Right ventricle myocardium inferior (tissue), 1 donor: ENCODE measurements at regions of chr10 and their contacts with region 1.

Region 1: DNA sequence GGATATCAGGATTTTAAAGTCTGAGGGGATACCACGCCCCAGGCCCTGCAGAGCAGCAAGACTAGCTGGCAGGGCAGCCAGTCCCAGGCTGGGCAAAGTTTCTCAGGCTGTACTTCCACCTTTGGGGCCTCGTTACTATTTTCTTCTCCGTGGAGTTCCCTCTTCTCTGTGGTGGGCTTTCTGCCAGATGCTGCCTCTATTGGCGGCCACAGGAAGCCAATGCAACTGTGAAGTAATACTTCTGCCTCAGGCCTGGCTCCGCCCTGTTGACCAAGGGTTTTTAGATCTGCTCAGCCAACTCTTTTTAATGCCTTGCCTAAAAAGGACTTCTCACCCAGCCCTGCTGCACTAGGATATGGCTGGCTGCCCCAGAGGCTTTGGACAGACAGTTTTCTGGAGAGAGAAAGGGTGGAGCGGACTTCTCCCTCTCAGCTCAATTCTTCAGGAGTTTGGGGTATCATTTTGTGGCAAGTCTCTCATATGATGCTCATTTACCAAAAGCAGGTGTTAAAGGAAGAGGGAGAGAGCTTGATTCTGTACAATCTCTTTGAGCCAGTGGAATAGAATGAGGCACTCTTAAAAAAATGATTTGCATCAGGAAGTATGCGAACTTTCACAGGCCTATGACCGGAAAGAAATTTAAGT is 67.4 kb downstream of the HHEX start:
- DNase-seq: peak; percentile 92
- ATAC-seq: peak; percentile 95

Region 2: GRCh38 chr10:92592761-92593618 is 164.2 kb before region 1 on chr10 and contains the start of gene KIF11:
- intact Hi-C with region 1: loop called (anchors 5 kb)
- DNase-seq: peak; percentile 100
- ATAC-seq: peak; percentile 97
- total RNA-seq, gene KIF11: 1.1 TPM

Region 3: GRCh38 chr10:92689663-92690210 is 67.5 kb before region 1 on chr10 and contains the start of gene HHEX:
- intact Hi-C with region 1: loop called (anchors 1 kb)
- DNase-seq: peak; percentile 91
- ATAC-seq: peak; percentile 76
- total RNA-seq, gene HHEX: 2.6 TPM

Region 4: GRCh38 chr10:92695679-92696605 is 61.2 kb before region 1 on chr10:
- intact Hi-C with region 1: loop called (anchors 1 kb)
- DNase-seq: no peak
- ATAC-seq: no peak

Region 5: DNA sequence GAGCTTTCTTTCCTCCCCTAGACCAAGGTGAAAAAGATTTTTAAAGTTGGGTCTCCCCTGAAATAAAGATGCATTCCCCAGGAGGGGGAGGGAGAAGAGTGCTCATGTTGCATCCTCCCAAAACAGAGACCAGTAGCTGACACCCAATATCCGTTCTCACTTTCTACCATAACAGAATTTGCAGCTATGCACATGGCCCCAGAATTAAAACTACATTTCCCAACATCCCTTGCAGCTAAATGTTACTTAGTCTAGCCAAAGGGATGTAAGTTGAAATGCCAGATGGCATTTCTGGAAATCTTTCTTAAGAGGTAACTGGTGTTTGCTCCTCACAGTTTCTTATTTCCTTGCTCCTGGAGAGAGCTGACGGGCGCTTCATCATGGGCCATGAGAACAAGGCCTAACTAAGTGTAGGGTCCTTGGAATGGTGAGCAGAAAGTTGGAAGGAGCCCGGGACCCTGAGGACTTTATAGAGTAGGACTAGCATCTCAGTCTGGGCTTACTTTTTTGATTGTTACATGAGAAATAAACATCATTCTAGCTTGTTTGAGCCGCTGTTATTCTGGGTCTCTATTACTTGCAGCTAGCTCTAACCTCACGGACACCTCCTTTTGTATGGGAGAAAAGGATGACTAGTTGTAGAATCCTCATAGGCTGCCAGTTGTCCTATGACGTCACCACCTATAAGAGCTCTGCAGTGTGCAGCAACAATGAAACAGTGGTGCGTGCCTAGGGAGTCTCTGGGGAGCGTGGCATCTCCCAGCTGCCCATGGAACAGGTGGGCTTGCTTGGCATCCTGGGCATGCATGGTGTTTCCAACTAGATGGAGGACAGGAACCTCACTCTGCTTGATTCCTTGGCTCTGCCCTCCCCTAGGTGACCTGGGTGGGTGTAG is 45.0 kb after region 1 on chr10:
- intact Hi-C with region 1: no loop called
- DNase-seq: no peak
- ATAC-seq: no peak

Region 6: DNA sequence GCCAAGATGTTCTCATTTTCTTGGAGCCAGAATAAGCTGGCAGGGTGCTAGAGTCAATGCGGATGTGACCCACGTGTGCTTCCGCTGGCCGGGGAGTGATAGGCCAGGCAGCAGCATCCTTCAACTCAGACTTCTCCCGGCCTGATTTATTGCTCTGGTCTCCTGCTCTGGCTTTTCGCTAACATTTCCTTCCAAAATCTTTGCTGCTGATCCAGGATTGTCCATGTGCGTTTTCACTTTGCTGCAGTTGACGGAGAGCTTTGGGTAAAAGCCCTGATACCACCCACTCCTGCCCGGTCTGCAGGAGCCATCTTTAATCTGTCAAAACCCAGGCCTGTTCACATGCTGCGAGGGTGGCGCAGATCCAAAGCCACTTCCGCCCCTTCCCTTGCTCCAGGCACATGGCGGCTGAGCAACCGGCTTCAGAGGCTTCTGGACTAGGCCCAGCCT is 423.3 kb after region 1 on chr10:
- intact Hi-C with region 1: no loop called
- DNase-seq: peak; percentile 68
- ATAC-seq: no peak